ENCODE measurements at regions of chr1 and their contacts with region 1.

Region 1: GRCh38 chr1:15046487-15047165 is 106.9 kb upstream of the TMEM51 start:
- DNase-seq: peak; percentile 53 to 96 (median 81)

Region 2: DNA sequence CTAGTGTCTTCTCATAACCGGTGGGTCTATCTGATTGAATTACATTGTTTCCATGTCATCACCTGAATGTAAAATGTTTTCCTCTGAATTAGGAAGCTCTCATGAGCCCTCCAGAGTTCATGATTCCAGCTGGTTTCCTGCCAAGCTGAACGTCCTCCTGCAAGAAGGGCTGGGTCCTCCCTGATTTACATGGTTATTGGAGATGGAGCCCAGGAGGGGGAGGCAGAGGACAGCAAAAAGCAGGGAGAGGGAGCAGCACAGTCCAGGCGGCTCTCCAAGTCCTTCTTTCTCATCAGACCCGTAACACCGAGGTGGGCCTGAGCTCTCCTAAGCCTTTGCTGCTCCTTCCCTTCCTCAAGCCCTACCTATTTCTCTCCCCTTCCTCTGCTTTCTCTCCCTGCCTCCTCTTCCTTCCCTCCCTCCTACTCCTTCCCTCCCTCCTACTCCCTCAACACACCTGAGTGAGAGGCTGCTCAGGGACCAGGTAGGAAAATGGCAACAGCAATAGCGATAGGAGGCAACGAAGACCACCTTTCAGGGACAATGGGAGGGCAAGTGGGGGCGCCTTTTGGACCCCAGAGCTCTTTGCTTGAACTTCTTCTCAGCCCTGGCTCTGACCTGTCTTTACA is 1080.7 kb before region 1 on chr1:
- intact Hi-C with region 1: loop called (anchors 5 kb)
- DNase-seq: peak in 9 of 10 donors; percentile 44 to 93 (median 68)

Region 3: GRCh38 chr1:14113841-14114567 is 932.6 kb before region 1 on chr1:
- intact Hi-C with region 1: loop called (anchors 5 kb)
- DNase-seq: peak; percentile 47 to 96 (median 78)

Region 4: DNA sequence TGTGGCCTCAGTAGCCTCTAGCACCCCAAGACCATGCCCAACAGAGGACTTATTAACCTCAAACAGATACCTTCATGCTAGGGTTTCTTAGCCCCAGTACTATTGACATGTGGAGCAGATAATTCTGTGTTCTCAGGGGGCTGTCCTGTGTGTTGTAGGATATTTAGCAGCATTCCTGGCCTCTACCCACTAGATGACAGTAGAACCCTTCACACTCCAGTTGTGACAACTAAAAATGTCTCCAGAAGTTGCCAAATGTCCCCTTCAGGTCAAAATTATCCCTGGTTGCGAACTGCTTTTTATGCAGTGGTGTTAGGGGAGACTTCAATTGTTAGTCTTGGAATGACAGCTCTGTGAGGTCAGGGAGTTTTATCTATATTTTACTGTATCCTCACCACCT is 440.0 kb before region 1 on chr1:
- intact Hi-C with region 1: loop called (anchors 1 kb)
- DNase-seq: no peak

Region 5: GRCh38 chr1:14915356-14916054 is 131.1 kb before region 1 on chr1:
- intact Hi-C with region 1: loop called (anchors 5 kb)
- DNase-seq: peak in 6 of 10 donors; percentile 42 to 87 (median 64)

Region 6: DNA sequence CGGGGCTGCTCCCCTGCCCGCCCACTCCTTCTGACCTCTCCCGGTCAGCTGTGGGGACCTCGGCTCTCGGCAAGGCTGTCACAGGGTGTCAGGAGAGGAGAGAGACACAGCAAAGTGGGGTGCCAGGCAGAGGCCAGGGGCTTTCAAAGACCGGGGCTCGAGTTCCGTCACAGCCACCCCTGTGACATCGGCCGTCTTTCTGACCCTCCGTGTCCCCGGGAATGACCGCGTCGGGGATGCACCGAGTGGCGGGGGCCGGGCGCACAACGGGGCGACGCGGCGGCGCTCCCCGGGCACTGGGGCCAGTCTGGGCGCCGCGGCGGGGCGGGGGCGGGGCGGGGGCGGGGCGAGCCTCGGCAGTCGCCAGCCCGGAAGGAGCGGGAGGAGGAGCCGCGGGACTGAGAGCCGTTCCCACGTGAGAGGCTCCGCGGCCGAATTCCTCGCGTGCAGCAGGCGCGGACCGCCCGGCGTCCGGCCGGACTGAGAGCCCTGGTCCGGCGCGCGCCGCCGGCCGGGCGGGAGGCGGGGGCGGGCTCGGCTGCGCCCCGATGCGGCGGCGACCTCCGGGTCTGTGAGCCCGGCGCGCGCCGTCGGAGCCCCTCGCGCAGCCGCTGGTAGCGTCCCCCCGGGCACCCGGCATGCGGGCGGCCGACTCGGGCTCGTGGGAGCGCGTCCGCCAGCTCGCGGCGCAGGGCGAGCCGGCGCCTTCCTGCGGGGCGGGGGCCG is 122.7 kb before region 1 on chr1:
- intact Hi-C with region 1: loop called (anchors 5 kb)
- DNase-seq: peak in 9 of 10 donors; percentile 49 to 95 (median 69)